Mammary epithelial cell (primary cell): ENCODE measurements at regions of chr4 and their contacts with region 1.

Region 1: DNA sequence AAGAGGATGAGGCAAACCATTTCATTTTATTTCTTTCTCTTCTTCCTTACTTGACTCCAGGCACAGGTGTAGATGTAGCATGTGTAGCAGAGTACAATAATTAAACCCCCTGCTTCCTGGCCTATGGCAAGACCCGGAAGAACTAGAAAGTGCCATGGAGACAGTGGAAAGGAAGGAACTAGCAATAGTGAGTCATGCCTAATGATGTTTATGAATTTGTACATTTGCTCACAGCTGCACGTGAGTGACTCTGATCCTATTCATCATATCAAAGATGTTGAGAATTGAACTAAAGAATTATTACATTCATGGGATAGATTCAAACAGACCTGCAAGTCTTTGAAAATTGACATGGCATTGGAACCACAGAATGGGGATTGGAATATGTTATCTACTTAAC is 2233.9 kb upstream of the TENM3 start:
- DNase-seq: no peak
- H3K4me3 ChIP-seq: no peak overlapping the region
- H3K27ac ChIP-seq: no peak overlapping the region
- H3K4me1 ChIP-seq: no peaks in the 10 kb centered on the region
- H3K27me3 ChIP-seq: no peaks in the 10 kb centered on the region
- CTCF ChIP-seq: no peak

Region 2: DNA sequence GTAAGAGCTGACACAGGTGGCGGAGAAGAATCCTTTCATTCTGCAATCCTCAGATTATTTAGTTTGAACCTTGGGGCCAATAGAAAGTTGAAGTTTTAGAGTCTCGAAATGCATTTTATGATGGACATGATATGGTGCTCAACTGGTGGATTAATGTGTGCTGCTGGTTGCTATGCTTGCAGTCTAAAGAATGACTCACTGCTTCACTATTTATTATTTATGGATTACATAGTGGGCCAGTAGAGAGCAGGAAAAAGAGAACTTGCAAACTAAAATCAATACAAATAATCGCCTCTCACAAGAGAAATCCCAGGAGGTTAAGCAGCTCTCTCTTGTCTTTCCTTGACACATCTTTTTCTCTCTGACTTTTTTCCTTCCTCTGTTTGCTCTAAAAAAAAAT is 240.3 kb before region 1 on chr4:
- CTCF ChIA-PET with region 1: no interaction called
- dilution Hi-C with region 1: no loop called
- in situ Hi-C with region 1: no loop called
- intact Hi-C with region 1: no loop called
- DNase-seq: no peak
- H3K4me3 ChIP-seq: no peak overlapping the region
- H3K27ac ChIP-seq: no peak overlapping the region
- H3K4me1 ChIP-seq: no peaks in the 10 kb centered on the region
- H3K27me3 ChIP-seq: no peaks in the 10 kb centered on the region
- CTCF ChIP-seq: no peak

Region 3: GRCh38 chr4:179817317-179817716 is 192.0 kb before region 1 on chr4:
- CTCF ChIA-PET with region 1: no interaction called
- dilution Hi-C with region 1: no loop called
- in situ Hi-C with region 1: no loop called
- intact Hi-C with region 1: no loop called
- DNase-seq: no peak
- H3K4me3 ChIP-seq: no peak overlapping the region
- H3K27ac ChIP-seq: no peak overlapping the region
- H3K4me1 ChIP-seq: no peaks in the 10 kb centered on the region
- H3K27me3 ChIP-seq: no peaks in the 10 kb centered on the region
- CTCF ChIP-seq: no peak

Region 4: DNA sequence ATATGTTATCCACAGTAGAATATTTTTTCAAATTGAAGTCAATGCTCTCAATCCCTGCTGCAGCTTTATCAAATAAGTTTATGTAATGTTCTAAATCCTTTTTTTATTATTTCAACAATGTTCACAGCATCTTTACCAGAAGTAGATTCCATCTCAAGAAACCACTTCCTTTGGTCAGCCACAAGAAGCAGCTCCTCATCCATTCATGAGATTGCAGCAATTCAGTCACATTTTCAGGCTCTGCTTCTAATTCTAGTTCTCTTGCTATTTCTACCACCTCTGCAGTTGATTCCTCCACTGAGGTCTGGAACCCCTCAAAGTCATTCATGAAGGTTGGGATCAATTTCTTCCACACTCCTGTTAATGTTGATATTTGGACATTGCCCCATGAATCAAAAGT is 67.4 kb before region 1 on chr4:
- CTCF ChIA-PET with region 1: no interaction called
- dilution Hi-C with region 1: loop called (anchors 5 kb)
- in situ Hi-C with region 1: no loop called
- intact Hi-C with region 1: no loop called
- DNase-seq: no peak
- H3K4me3 ChIP-seq: no peak overlapping the region
- H3K27ac ChIP-seq: no peak overlapping the region
- H3K4me1 ChIP-seq: no peaks in the 10 kb centered on the region
- H3K27me3 ChIP-seq: no peaks in the 10 kb centered on the region
- CTCF ChIP-seq: no peak